ENCODE measurements at regions of chr2 and their contacts with region 1.

Region 1: DNA sequence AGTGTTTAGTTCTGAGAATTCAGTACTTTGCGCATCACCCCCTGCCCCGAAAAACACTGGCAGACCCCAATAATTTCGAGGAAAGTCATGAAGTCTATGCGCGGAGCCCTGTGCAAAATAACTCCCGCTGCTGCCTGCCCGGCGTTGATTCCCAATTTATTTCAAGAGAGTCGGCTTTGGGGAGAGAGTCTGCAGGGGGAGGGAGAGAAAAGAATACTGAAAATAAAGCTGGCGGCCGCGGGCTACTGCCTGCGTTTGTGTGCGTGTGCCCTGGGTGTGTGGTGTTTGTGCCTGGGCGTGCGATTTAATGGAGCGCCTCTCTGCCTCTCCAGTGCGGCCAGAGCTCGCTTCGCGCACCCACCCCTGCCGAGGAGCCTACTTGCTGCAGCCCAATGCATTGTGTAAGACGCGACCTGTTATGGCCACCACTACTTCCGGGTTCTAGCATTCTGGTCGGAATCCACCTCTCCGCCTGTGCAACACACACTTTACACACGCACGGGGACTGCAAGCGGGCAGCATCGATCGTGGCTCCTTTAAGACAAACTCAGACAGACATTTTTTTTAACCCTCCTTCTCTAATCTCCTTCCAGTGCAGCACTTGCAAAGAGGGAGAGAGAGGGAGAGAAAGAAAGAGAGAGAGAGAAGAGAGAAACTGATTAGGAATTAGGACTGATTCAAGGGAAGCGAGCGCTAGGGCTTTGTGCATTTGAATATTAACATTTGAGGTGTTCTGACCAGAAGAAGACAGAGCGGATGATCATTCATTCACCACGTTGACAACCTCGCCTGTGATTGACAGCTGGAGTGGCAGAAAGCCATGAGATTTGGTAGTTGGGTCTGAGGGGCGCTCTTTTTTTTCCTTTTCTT is at the start of gene MEIS1:
- DNase-seq: peak; percentile 93 to 96
- H3K4me3 ChIP-seq: peak within 1 kb of the TSS; percentile 75
- H3K4me3 Mint-ChIP-seq: peak within 1 kb of the TSS; percentile 81
- H3K27ac Mint-ChIP-seq: peak within 1 kb of the TSS; percentile 82
- H3K4me1 ChIP-seq: peaks cover 16% of the 10 kb centered on the region
- H3K4me1 Mint-ChIP-seq: peaks cover 20% of the 10 kb centered on the region
- H3K27me3 ChIP-seq: no peaks in the 10 kb centered on the region
- H3K27me3 Mint-ChIP-seq: no peaks in the 10 kb centered on the region
- CTCF ChIP-seq: peak in 1 of 2 experiments; percentile 7
- total RNA-seq, gene MEIS1: 7.4 and 10.5 TPM in 2 replicates

Region 2: GRCh38 chr2:66528974-66529724 is 94.2 kb after region 1 on chr2:
- CTCF ChIA-PET with region 1: no interaction called
- POLR2A ChIA-PET with region 1: no interaction called
- intact Hi-C with region 1: loop called (anchors 1 kb)
- DNase-seq: peak; percentile 23 to 47
- H3K4me3 ChIP-seq: no peak overlapping the region
- H3K4me3 Mint-ChIP-seq: no peak overlapping the region
- H3K27ac Mint-ChIP-seq: no peak overlapping the region
- H3K4me1 ChIP-seq: peaks cover 13% of the 10 kb centered on the region; the same call in 1 of the 2 replicates
- H3K4me1 Mint-ChIP-seq: peaks cover 11% of the 10 kb centered on the region
- H3K27me3 ChIP-seq: no peaks in the 10 kb centered on the region
- H3K27me3 Mint-ChIP-seq: no peaks in the 10 kb centered on the region
- CTCF ChIP-seq: no peak

Region 3: GRCh38 chr2:66574701-66575624 is 140.0 kb after region 1 on chr2:
- CTCF ChIA-PET with region 1: interaction called, 19 read pairs
- POLR2A ChIA-PET with region 1: interaction called, 20 read pairs
- intact Hi-C with region 1: loop called (anchors 2 kb)
- DNase-seq: peak; percentile 65 to 71
- H3K4me3 ChIP-seq: peak overlapping the region; percentile 42
- H3K4me3 Mint-ChIP-seq: peak overlapping the region; percentile 75
- H3K27ac Mint-ChIP-seq: peak overlapping the region; percentile 29
- H3K4me1 ChIP-seq: peaks cover 9% of the 10 kb centered on the region; the same call in 1 of the 2 replicates
- H3K4me1 Mint-ChIP-seq: peaks cover 14% of the 10 kb centered on the region
- H3K27me3 ChIP-seq: peaks cover 1% of the 10 kb centered on the region
- H3K27me3 Mint-ChIP-seq: peaks cover 8% of the 10 kb centered on the region
- CTCF ChIP-seq: peak; percentile 57 to 71

Region 4: DNA sequence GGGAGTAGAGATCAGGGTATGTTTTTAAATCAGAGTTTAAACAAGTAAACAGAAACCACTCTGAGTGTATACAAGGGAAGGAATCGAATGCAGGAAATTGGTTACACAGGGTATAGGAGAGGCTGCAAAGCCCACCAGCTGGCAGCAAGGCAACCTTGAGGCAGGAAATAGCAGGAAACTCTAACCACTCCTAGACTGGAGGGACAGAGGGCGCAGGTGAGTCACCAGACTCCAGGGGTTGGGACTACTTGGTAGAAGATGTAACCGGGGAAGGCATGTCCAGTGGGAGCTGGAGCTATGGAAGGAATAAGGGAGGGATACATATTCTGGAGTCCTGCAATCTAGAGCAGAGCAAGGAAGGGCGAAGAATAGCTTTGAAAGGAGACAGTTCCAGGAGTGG is 152.3 kb after region 1 on chr2:
- CTCF ChIA-PET with region 1: no interaction called
- POLR2A ChIA-PET with region 1: no interaction called
- intact Hi-C with region 1: no loop called
- DNase-seq: peak; percentile 55 to 60
- H3K4me3 ChIP-seq: no peak overlapping the region
- H3K4me3 Mint-ChIP-seq: no peak overlapping the region
- H3K27ac Mint-ChIP-seq: no peak overlapping the region
- H3K4me1 ChIP-seq: no peaks in the 10 kb centered on the region
- H3K4me1 Mint-ChIP-seq: no peaks in the 10 kb centered on the region
- H3K27me3 ChIP-seq: no peaks in the 10 kb centered on the region; the same call in 1 of the 2 replicates
- H3K27me3 Mint-ChIP-seq: no peaks in the 10 kb centered on the region
- CTCF ChIP-seq: peak in 1 of 2 experiments; percentile 69

Region 5: GRCh38 chr2:67234439-67234838 is 799.5 kb after region 1 on chr2:
- CTCF ChIA-PET with region 1: no interaction called
- POLR2A ChIA-PET with region 1: no interaction called
- intact Hi-C with region 1: loop called (anchors 10 kb)
- DNase-seq: peak in 1 of 2 experiments; percentile 47
- H3K4me3 ChIP-seq: no peak overlapping the region
- H3K4me3 Mint-ChIP-seq: no peak overlapping the region
- H3K27ac Mint-ChIP-seq: no peak overlapping the region
- H3K4me1 ChIP-seq: no peaks in the 10 kb centered on the region
- H3K4me1 Mint-ChIP-seq: no peaks in the 10 kb centered on the region
- H3K27me3 ChIP-seq: no peaks in the 10 kb centered on the region
- H3K27me3 Mint-ChIP-seq: peaks cover 6% of the 10 kb centered on the region
- CTCF ChIP-seq: peak; percentile 50 to 67

Region 6: DNA sequence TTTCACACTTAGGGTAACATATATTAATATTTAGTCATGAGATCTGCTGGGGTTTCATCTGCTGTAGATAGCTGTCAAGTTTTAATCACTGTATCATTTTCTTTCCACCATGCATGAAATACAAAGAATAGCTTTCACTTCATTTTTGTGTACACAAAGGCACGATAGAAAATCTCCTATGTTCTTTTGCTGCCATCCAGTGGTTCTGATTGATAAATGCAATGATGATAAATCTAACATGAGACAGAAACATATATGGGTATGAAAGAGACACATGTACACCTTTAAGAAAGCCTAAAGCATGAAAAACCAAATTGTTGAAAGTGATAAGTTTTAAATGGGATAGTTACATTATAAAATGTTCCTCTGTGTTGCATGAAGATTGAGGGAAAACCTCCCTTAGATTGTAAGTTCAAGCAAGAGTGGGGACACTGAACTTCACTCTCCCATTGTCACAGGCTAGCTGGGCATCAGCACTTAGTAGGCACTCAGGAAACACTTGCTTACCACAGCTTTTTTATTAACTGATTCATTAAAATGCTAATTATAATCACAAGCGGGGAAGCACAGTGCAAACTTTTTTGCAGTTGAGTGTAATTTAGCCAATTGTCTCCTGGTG is 1596.7 kb after region 1 on chr2:
- CTCF ChIA-PET with region 1: interaction called, 6 read pairs
- POLR2A ChIA-PET with region 1: no interaction called
- intact Hi-C with region 1: loop called (anchors 10 kb)
- DNase-seq: peak in 1 of 2 experiments; percentile 54
- H3K4me3 ChIP-seq: no peak overlapping the region
- H3K4me3 Mint-ChIP-seq: no peak overlapping the region
- H3K27ac Mint-ChIP-seq: no peak overlapping the region
- H3K4me1 ChIP-seq: no peaks in the 10 kb centered on the region
- H3K4me1 Mint-ChIP-seq: no peaks in the 10 kb centered on the region
- H3K27me3 ChIP-seq: no peaks in the 10 kb centered on the region
- H3K27me3 Mint-ChIP-seq: no peaks in the 10 kb centered on the region
- CTCF ChIP-seq: peak; percentile 40 to 69